Gastrocnemius medialis (tissue), 4 donors: ENCODE measurements at regions of chr6 and their contacts with region 1.

Region 1: GRCh38 chr6:133568970-133569889 is 319.7 kb upstream of the TCF21 start:
- DNase-seq: peak; percentile 26 to 55
- ATAC-seq: peak; percentile 94 to 97
- H3K4me3 ChIP-seq: peak overlapping the region; percentile 45 to 58 (median 52)
- H3K27ac ChIP-seq: peak overlapping the region; percentile 51 to 78 (median 72)
- H3K4me1 ChIP-seq: peaks cover 0 to 8% of the 10 kb centered on the region in 2 donors
- H3K27me3 ChIP-seq: no peaks in the 10 kb centered on the region
- CTCF ChIP-seq: peak; percentile 83 to 98 (median 93)
- POLR2A ChIP-seq: no peak

Region 2: DNA sequence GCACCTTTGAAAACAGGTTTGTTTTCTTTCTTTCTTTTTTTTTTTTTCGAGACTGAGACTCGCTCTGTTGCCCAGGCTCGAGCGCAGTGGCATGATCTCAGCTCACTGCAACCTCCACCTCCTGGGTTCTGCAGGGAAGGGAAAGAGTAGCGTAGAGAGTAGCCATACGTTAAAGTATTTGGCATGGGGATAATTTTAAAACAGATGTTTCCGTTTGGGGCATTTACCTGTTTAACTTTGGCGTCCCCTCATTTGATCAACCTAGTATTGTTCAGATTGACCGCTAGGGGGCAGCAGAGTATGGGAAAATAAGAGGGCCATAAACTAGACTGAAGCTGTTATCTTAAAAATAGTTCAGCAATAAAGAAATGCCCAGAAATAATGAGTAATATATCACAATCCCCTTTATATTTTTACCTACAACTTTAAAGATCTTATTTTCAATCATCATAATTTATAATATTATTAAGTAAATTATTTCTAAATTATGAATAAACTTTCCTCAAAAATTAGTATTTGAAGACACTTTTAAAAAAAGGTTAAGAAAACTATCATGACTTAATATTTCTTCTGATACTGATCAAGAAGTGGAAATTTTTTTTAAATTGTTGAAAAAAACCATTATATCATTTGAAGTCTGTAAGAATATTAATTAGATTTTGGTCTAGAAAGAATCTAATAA is 1038.8 kb before region 1 on chr6:
- in situ Hi-C with region 1: loop called in 2 of 4 experiments (anchors 25 kb)
- intact Hi-C with region 1: no loop called
- DNase-seq: peak; percentile 14 to 24
- ATAC-seq: peak; percentile 54 to 82
- H3K4me3 ChIP-seq: no peak overlapping the region
- H3K27ac ChIP-seq: no peak overlapping the region
- H3K4me1 ChIP-seq: no peaks in the 10 kb centered on the region
- H3K27me3 ChIP-seq: no peaks in the 10 kb centered on the region
- CTCF ChIP-seq: peak; percentile 55 to 86 (median 68)
- POLR2A ChIP-seq: no peak

Region 3: GRCh38 chr6:132962936-132963868 is 606.0 kb before region 1 on chr6:
- in situ Hi-C with region 1: loop called in 1 of 4 experiments (anchors 25 kb)
- intact Hi-C with region 1: no loop called
- DNase-seq: peak; percentile 50 to 68
- ATAC-seq: peak; percentile 63 to 87
- H3K4me3 ChIP-seq: no peak overlapping the region
- H3K27ac ChIP-seq: no peak overlapping the region
- H3K4me1 ChIP-seq: peaks cover 19 to 23% of the 10 kb centered on the region in 2 donors
- H3K27me3 ChIP-seq: no peaks in the 10 kb centered on the region
- CTCF ChIP-seq: peak; percentile 57 to 76 (median 70)
- POLR2A ChIP-seq: no peak

Region 4: DNA sequence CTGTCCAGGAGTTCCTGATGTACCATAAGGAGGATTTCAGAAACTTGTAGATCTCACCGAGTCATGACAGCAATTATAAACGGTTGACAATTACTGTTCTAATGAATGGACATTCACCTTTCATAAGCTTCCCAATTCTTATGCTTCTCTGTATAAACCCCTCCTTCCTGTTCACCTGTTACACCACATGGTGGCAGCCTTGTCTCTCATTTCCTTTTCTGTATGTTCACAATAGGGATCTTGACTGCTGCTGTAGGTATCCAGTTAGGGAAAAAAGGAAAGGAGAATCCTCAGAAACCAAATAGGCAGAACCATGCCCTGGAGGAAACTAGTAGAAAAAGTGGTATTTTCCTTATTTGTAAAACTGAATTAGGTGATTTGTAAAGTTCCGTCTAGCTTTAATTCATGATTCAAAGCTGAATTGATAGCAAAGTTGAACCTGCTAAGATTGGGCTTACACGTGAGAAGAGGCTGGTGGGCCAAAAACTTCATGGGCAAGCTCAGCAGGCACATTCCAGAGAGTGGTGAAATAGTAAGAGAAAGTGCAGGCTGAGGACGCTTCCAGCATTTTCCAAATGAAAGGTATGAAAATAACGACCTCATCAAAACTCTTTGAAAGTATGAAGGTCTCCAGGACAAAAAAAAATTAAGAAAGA is 354.8 kb after region 1 on chr6:
- in situ Hi-C with region 1: loop called (anchors 5 kb)
- intact Hi-C with region 1: no loop called
- DNase-seq: peak; percentile 38 to 53
- ATAC-seq: peak; percentile 80 to 98
- H3K4me3 ChIP-seq: no peak overlapping the region
- H3K27ac ChIP-seq: no peak overlapping the region
- H3K4me1 ChIP-seq: no peaks in the 10 kb centered on the region
- H3K27me3 ChIP-seq: peaks cover 0 to 3% (median 0%) of the 10 kb centered on the region in 3 donors
- CTCF ChIP-seq: peak; percentile 67 to 89 (median 80)
- POLR2A ChIP-seq: no peak

Region 5: DNA sequence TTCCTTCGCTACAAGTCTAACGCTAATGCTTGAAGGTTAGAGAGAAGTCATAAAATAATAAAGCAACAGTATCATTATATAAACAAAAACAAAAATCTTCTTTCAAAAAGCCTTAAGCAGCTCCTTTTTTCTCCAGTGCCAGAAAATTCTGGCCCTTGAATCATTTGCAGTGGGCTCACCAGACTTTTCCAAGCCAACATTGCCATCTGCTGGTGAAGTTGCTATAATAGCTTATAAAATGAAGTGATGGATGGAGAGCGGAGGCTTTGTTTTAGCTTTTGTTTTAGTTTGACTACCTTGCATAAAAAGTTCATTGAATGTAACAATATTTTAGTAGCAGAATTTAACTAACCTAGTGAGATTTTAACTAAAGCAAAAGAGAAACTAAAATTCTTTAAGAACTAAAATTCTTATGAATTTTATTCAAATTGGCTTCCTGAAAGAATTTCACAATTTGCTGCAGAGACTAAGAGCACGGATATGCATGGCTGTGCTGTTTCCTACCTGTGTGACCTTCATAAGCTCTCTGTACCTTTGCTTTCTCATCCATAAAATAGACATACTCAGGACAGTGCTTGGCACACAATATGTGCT is 528.0 kb after region 1 on chr6:
- in situ Hi-C with region 1: loop called in 2 of 4 experiments (anchors 10 kb)
- intact Hi-C with region 1: loop called (anchors 10 kb)
- DNase-seq: peak in 1 of 2 donors; percentile 34
- ATAC-seq: peak in 1 of 2 donors; percentile 81
- H3K4me3 ChIP-seq: no peak overlapping the region
- H3K27ac ChIP-seq: no peak overlapping the region
- H3K4me1 ChIP-seq: no peaks in the 10 kb centered on the region
- H3K27me3 ChIP-seq: no peaks in the 10 kb centered on the region
- CTCF ChIP-seq: peak; percentile 50 to 67 (median 65)
- POLR2A ChIP-seq: no peak